ENCODE measurements at regions of chrX and their contacts with region 1.

Region 1: DNA sequence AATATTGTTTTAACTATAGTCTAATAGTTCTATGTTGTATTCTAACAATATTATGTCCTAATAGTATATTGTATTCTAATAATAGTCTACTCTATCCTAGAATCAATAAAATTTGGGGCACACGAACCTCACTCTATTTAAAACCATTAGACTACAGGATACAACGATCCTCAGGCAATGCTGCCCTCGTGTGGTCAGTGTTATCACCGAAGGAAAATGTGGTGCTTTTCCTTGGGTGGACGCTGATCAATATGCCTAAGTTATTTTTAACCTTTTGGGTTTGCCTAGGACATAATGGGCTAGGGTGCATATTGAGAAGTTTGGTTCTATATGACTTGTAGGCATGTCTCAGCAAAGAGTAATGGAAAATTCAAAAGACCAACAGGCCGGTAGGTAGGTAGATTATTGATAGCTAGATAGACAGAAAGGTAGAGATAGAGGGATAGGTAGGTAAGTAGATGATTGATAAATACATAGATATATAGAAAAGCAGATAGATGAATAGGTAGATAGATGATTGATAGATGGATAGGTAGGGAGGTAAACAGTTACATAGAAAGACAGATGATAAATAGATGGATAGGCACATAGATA is 75.1 kb downstream of the PRKX start:
- DNase-seq: peak; percentile 11
- ATAC-seq: peak; percentile 47; the same call in 2 of the 3 replicates
- H3K4me3 ChIP-seq: no peak overlapping the region
- H3K27ac ChIP-seq: no peak overlapping the region
- H3K4me1 ChIP-seq: no peaks in the 10 kb centered on the region
- H3K27me3 ChIP-seq: no peaks in the 10 kb centered on the region; a peak in 1 of 5 replicates
- CTCF ChIP-seq: peak; percentile 67
- EP300 ChIP-seq: no peak
- POLR2A ChIP-seq: no peak
- RAD21 ChIP-seq: no peak

Region 2: GRCh38 chrX:2875798-2876399 is 762.5 kb before region 1 on chrX:
- CTCF ChIA-PET with region 1: interaction called, 8 read pairs
- POLR2A ChIA-PET with region 1: no interaction called
- in situ Hi-C with region 1: no loop called
- intact Hi-C with region 1: loop called (anchors 5 kb)
- DNase-seq: peak; percentile 18
- ATAC-seq: peak; percentile 73
- H3K4me3 ChIP-seq: no peak overlapping the region
- H3K27ac ChIP-seq: no peak overlapping the region
- H3K4me1 ChIP-seq: no peaks in the 10 kb centered on the region
- H3K27me3 ChIP-seq: no peaks in the 10 kb centered on the region
- CTCF ChIP-seq: 0 out of 2 replicates have a peak, but pooled peaks have one; percentile 17
- EP300 ChIP-seq: no peak
- POLR2A ChIP-seq: no peak
- RAD21 ChIP-seq: no peak

Region 3: GRCh38 chrX:3119376-3119775 is 519.0 kb before region 1 on chrX:
- CTCF ChIA-PET with region 1: no interaction called
- POLR2A ChIA-PET with region 1: no interaction called
- in situ Hi-C with region 1: no loop called
- intact Hi-C with region 1: loop called (anchors 5 kb)
- DNase-seq: no peak
- ATAC-seq: no peak
- H3K4me3 ChIP-seq: no peak overlapping the region
- H3K27ac ChIP-seq: no peak overlapping the region
- H3K4me1 ChIP-seq: no peaks in the 10 kb centered on the region
- H3K27me3 ChIP-seq: no peaks in the 10 kb centered on the region
- CTCF ChIP-seq: no peak
- EP300 ChIP-seq: no peak
- POLR2A ChIP-seq: no peak
- RAD21 ChIP-seq: no peak

Region 4: GRCh38 chrX:3407781-3408180 is 230.6 kb before region 1 on chrX:
- CTCF ChIA-PET with region 1: no interaction called
- POLR2A ChIA-PET with region 1: no interaction called
- in situ Hi-C with region 1: no loop called
- intact Hi-C with region 1: no loop called
- DNase-seq: no peak
- ATAC-seq: no peak
- H3K4me3 ChIP-seq: no peak overlapping the region
- H3K27ac ChIP-seq: no peak overlapping the region
- H3K4me1 ChIP-seq: no peaks in the 10 kb centered on the region
- H3K27me3 ChIP-seq: no peaks in the 10 kb centered on the region
- CTCF ChIP-seq: no peak
- EP300 ChIP-seq: no peak
- POLR2A ChIP-seq: no peak
- RAD21 ChIP-seq: no peak